A673 (cell line): ENCODE measurements at regions of chr10 and their contacts with region 1.

Region 1: GRCh38 chr10:82378146-82378545 is 503.2 kb downstream of the NRG3 start:
- DNase-seq: no peak
- H3K4me3 ChIP-seq: no peak overlapping the region
- H3K27ac ChIP-seq: no peak overlapping the region
- H3K4me1 ChIP-seq: no peaks in the 10 kb centered on the region
- H3K27me3 ChIP-seq: no peaks in the 10 kb centered on the region
- CTCF ChIP-seq: no peak

Region 2: DNA sequence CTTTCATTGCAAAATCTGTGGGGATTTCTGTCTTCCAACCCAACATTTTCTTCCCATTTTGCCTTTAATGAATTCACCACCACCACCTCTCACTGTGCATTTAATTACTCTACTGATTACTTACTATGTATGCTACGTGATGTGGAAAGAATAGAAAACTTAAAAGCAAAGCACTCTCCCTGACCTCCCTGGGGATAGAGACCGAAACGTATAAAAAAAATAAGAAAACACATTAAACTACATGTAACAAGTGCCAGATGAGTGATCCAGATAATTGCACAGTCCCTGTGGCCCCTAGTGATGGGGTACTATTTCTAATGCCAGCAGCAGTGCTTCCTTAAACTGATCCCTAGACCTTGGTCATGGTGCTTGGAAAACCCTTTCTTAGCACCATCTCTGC is 24.8 kb before region 1 on chr10:
- CTCF ChIA-PET with region 1: interaction called, 11 read pairs
- POLR2A ChIA-PET with region 1: no interaction called
- intact Hi-C with region 1: no loop called
- DNase-seq: no peak
- H3K4me3 ChIP-seq: no peak overlapping the region
- H3K27ac ChIP-seq: no peak overlapping the region
- H3K4me1 ChIP-seq: no peaks in the 10 kb centered on the region
- H3K27me3 ChIP-seq: no peaks in the 10 kb centered on the region
- CTCF ChIP-seq: no peak

Region 3: GRCh38 chr10:82721831-82722230 is 343.7 kb after region 1 on chr10:
- CTCF ChIA-PET with region 1: no interaction called
- POLR2A ChIA-PET with region 1: no interaction called
- intact Hi-C with region 1: no loop called
- DNase-seq: no peak
- H3K4me3 ChIP-seq: no peak overlapping the region
- H3K27ac ChIP-seq: no peak overlapping the region
- H3K4me1 ChIP-seq: no peaks in the 10 kb centered on the region
- H3K27me3 ChIP-seq: no peaks in the 10 kb centered on the region
- CTCF ChIP-seq: no peak